HEK293 (cell line): ENCODE measurements at regions of chr21 and their contacts with region 1.

Region 1: DNA sequence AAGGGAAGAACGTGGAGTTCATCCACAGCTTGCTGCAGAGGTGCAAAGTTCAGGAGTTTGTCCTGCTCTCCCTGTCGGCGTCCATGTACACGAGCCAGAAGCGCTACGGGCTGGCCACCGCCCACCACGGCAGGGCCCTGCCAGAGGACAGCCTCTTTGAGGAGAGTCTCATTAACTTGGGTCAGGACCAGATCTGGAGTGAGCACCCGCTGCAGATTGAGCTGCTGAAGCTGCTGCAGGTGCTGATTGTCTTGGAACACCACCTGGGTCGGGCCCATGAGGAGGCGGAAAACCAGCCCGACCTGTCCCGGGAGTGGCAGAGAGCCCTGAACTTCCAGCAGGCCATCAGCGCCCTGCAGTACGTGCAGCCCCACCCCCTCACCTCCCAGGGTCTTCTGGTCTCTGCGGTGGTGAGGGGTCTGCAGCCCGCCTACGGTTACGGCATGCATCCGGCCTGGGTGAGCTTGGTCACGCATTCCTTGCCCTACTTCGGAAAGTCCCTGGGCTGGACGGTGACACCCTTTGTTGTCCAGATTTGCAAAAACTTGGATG is 73.8 kb upstream of the MORC3 start:
- H3K4me3 ChIP-seq: no peak overlapping the region
- H3K27ac ChIP-seq: no peak overlapping the region
- H3K4me1 ChIP-seq: no peaks in the 10 kb centered on the region
- CTCF ChIP-seq: no peak

Region 2: DNA sequence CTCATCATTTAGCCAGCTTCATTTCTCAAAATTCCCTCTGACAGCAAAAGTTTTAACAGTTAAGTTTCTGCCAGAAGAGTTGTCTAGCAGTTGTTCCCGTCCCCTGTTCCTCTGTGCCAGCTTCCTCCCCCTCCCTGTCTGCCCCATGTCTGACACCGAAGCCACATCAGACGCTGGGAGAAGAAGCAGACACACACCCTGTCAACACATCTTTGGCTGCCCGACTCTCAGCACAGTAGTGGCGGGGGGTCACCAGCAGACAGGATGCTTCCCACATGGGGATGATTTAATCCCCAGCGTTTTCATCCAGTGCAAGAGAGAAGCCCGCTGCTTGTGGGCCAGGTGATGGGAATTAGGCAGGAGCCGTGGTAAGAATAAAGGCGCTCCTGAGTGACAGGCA is 817.7 kb before region 1 on chr21:
- CTCF ChIA-PET with region 1: no interaction called
- POLR2A ChIA-PET with region 1: no interaction called
- H3K4me3 ChIP-seq: no peak overlapping the region
- H3K27ac ChIP-seq: no peak overlapping the region
- H3K4me1 ChIP-seq: no peaks in the 10 kb centered on the region
- CTCF ChIP-seq: no peak

Region 3: GRCh38 chr21:35989138-35989735 is 256.9 kb before region 1 on chr21:
- CTCF ChIA-PET with region 1: no interaction called
- POLR2A ChIA-PET with region 1: no interaction called
- H3K4me3 ChIP-seq: no peak overlapping the region
- H3K27ac ChIP-seq: no peak overlapping the region
- H3K4me1 ChIP-seq: no peaks in the 10 kb centered on the region
- CTCF ChIP-seq: no peak

Region 4: DNA sequence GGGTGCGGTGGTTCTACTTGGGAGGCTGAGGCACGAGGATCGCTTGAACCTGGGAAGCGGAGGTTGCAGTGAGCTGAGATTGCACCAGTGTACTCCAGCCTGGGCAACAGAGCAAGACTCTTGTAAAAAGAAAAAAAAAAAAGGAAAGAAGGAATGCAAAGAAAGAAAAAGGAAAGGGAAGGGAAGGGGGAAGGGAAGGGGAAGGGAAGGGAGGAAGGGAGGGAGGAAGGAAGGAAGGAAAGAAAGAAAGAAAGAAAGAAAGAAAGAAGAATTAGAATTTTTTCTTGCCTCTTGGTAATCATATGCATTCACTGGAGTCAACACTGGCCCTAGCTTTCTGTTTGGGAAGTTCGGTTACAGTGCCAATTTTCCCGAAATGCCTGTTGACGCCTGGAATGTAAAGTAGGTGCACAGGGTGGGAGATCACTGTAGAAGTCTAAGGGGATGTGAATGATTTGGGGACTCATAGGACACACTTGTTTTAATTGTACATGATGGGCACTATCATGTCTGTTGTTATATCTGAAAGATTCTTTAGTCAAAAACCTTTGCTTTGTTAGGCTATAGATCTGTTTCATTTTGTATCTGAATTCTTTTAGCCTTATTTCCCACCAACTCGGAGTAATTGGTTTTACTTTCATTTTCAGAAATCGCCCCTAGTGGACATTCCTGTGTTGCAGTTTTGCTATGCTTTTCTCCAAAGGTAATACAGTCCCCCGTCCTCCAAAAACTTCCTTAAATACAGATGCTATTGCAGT is 14.1 kb after region 1 on chr21:
- CTCF ChIA-PET with region 1: interaction called, 10 read pairs
- POLR2A ChIA-PET with region 1: interaction called, 7 read pairs
- H3K4me3 ChIP-seq: peak overlapping the region; percentile 7
- H3K27ac ChIP-seq: no peak overlapping the region
- H3K4me1 ChIP-seq: no peaks in the 10 kb centered on the region
- CTCF ChIP-seq: peak; percentile 45